ENCODE measurements at regions of chr3 and their contacts with region 1.

Region 1: DNA sequence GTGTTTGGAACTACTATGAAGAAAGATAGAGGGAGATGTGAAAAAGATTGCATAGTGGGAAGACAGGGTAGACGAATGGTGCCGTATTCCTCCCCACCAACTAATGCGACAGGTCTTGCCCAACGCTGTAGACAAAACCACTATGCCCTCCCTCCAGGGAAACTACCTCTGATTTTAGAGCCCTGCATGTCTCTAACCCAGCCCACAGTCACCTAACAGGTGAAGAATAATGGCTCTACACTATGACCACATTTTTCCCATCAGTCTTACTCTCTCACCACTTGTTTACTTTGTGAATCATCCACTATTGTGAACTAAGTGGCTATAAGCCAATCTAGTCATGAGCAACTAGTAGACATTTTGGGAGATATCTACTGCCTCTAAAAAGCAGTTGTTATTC is 108.1 kb upstream of the UBE2E2 start:
- DNase-seq: peak; percentile 95
- H3K4me3 Mint-ChIP-seq: peak overlapping the region; percentile 7
- H3K27ac Mint-ChIP-seq: peak overlapping the region; percentile 13
- H3K4me1 Mint-ChIP-seq: peaks cover 21% of the 10 kb centered on the region
- H3K27me3 Mint-ChIP-seq: peaks cover 17% of the 10 kb centered on the region
- CTCF ChIP-seq: no peak

Region 2: GRCh38 chr3:23075496-23075895 is 19.5 kb before region 1 on chr3:
- CTCF ChIA-PET with region 1: no interaction called
- POLR2A ChIA-PET with region 1: no interaction called
- intact Hi-C with region 1: no loop called
- DNase-seq: no peak
- H3K4me3 Mint-ChIP-seq: no peak overlapping the region
- H3K27ac Mint-ChIP-seq: no peak overlapping the region
- H3K4me1 Mint-ChIP-seq: peaks cover 12% of the 10 kb centered on the region
- H3K27me3 Mint-ChIP-seq: peaks cover 52% of the 10 kb centered on the region
- CTCF ChIP-seq: no peak

Region 3: DNA sequence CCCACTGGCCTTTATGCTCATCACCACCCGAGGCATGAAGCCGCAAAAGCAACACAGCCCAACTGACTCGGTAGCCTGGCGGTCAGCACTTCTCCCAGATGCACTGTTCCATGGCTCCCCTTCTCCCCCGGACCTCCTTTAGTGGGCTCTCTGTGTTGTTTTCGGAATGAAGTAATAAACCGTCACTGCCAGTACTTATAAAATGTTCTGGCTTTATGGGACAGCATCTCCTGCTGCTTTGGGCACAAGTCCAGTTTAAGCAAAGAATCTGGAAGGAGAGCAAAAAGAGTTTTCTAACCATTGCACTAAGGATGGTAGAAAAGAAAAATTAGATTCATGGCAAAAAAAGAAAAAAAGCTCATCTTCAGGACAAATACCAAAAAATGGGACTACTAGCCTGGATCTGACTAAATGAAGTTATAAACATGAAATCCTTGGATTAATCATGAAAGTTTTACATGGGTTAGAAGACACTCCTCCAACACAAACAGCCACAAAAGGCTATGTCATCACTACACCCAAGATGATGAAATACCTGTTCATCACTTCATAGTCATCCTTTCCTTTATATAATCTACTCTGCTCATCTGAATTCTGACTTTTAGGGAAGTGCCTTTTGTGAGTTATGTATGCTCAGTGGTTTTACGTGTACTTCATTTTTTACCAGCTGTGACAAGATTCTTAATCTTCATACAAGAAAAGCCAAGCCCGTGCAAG is 18.6 kb after region 1 on chr3:
- CTCF ChIA-PET with region 1: interaction called, 3 read pairs
- POLR2A ChIA-PET with region 1: interaction called, 4 read pairs
- intact Hi-C with region 1: loop called (anchors 1 kb)
- DNase-seq: peak; percentile 87
- H3K4me3 Mint-ChIP-seq: peak overlapping the region; percentile 24
- H3K27ac Mint-ChIP-seq: peak overlapping the region; percentile 88
- H3K4me1 Mint-ChIP-seq: peaks cover 25% of the 10 kb centered on the region
- H3K27me3 Mint-ChIP-seq: peaks cover 11% of the 10 kb centered on the region
- CTCF ChIP-seq: no peak